Activated CD4-positive, alpha-beta memory T cell treated with anti-CD3 and anti-CD28 coated beads for 36 hours (primary cell): ENCODE measurements at regions of chr13 and their contacts with region 1.

Region 1: DNA sequence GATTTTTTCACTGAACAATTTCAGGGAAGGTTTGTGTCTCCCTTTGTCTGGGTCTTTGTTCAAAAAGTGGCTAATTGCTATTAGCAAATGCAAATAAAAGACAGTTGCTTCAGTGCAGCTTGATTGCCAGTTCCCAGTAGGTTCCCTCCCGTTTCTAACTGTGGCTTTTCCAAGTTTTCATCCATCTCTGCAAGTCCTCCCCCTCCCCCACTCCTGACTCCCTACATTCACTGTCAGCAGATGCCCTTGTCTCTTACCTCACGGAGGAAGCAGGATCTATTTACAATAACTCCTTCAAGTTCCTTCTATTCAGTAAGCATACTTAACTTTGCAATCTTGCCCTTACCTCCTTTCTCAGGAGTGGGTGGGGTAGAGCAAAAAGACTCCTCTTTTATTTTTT is 55.4 kb upstream of the SCEL start:
- DNase-seq: no peak
- H3K4me3 Mint-ChIP-seq: no peak overlapping the region
- H3K27ac Mint-ChIP-seq: no peak overlapping the region
- H3K4me1 Mint-ChIP-seq: peaks cover 18% of the 10 kb centered on the region
- H3K27me3 Mint-ChIP-seq: no peaks in the 10 kb centered on the region

Region 2: GRCh38 chr13:77184455-77184854 is 295.6 kb before region 1 on chr13:
- CTCF ChIA-PET with region 1: interaction called, 11 read pairs
- POLR2A ChIA-PET with region 1: no interaction called
- intact Hi-C with region 1: loop called (anchors 2 kb)
- DNase-seq: peak; percentile 77
- H3K4me3 Mint-ChIP-seq: no peak overlapping the region
- H3K27ac Mint-ChIP-seq: peak overlapping the region; percentile 40
- H3K4me1 Mint-ChIP-seq: peaks cover 22% of the 10 kb centered on the region
- H3K27me3 Mint-ChIP-seq: no peaks in the 10 kb centered on the region

Region 3: DNA sequence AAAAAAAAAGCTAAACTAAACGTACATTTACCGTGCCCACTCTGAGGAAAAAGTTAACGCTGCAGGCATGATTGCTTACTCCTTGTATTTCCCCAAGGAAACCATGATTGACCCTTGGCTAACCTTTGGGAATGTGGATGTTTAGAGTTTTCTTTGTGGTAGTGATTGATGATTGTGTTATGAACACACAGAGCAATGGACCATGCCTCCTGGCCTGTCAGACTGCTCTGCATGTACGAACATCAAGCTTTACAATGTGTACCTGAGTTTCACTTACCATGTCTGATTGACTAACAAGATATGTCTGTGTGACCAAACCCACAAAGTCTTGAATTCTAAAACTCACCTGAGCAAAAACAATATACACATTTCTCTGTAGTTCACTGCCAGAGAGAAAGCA is 188.3 kb before region 1 on chr13:
- CTCF ChIA-PET with region 1: interaction called, 13 read pairs
- POLR2A ChIA-PET with region 1: no interaction called
- intact Hi-C with region 1: loop called (anchors 2 kb)
- DNase-seq: no peak
- H3K4me3 Mint-ChIP-seq: no peak overlapping the region
- H3K27ac Mint-ChIP-seq: peak overlapping the region; percentile 42
- H3K4me1 Mint-ChIP-seq: peaks cover 39% of the 10 kb centered on the region
- H3K27me3 Mint-ChIP-seq: no peaks in the 10 kb centered on the region

Region 4: GRCh38 chr13:77345150-77345780 is 134.8 kb before region 1 on chr13:
- CTCF ChIA-PET with region 1: no interaction called
- POLR2A ChIA-PET with region 1: interaction called, 4 read pairs
- intact Hi-C with region 1: loop called (anchors 1 kb)
- DNase-seq: peak; percentile 53
- H3K4me3 Mint-ChIP-seq: peak overlapping the region; percentile 51
- H3K27ac Mint-ChIP-seq: peak overlapping the region; percentile 90
- H3K4me1 Mint-ChIP-seq: peaks cover 24% of the 10 kb centered on the region
- H3K27me3 Mint-ChIP-seq: no peaks in the 10 kb centered on the region

Region 5: DNA sequence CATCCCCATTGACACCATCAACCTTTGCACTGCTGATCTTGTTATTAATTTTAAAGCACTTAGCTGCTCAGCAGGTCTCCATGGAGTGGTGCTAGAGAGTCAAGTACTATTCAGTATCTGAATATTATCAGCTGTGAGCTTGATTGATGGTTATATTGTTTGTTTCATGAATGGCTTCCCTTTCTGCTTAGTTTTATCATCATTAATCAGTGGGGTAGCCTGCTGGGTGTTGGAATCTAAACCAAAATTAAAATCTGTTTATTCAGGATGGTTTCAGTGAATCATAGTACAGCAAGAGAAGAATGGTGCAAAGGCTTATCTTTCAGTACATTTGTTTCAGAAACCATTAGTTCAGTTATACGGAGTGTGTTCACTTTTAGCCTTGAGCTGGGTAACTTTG is 12.9 kb after region 1 on chr13:
- CTCF ChIA-PET with region 1: interaction called, 15 read pairs
- POLR2A ChIA-PET with region 1: no interaction called
- intact Hi-C with region 1: no loop called
- DNase-seq: no peak
- H3K4me3 Mint-ChIP-seq: no peak overlapping the region
- H3K27ac Mint-ChIP-seq: no peak overlapping the region
- H3K4me1 Mint-ChIP-seq: no peaks in the 10 kb centered on the region
- H3K27me3 Mint-ChIP-seq: peaks cover 2% of the 10 kb centered on the region

Region 6: DNA sequence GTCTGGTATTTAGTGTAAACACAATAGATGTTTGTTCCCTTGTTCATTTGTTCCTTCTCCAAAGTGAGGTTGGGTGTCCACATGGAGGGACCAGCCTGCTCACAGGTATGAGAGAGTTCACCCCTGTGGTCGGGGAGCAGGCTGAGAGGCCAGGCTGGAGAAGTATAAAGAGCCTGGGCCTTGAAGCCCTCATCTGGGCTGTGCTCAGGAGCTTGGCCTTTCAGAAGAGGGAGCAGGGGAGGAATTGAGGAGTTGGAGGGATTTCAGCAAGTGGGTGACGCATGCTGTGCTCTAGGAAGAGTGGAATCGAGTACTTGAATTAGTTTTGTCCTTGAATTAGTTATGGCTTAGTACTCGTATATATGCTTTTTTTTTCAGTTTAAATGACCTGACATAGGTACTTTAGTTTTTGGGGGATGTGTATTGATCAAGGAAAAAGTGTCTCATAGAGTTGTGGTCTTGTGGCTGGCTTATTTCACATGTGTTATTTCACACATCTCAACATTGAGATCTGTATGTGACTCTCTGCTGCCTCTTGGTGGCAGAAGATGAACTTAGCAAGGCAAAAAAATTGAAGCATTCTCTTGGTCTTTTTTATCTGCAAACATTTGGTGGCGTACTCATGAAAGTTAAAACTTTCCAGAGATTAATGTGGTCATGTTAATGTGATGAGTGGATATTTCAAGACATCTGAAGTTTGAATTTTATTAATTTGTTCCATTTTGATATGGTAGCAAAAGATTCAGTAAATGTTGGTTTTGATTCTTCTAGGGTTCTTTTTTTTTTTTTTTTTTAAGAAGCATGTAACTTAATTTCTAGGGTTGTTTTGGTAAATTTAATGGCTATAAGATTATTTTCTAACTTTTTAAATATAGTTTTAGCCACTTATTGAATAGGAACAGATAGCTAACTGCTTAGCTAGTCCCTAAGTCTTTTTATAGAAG is 271.7 kb after region 1 on chr13:
- CTCF ChIA-PET with region 1: interaction called, 6 read pairs
- POLR2A ChIA-PET with region 1: no interaction called
- intact Hi-C with region 1: loop called (anchors 1 kb)
- DNase-seq: peak; percentile 46
- H3K4me3 Mint-ChIP-seq: no peak overlapping the region
- H3K27ac Mint-ChIP-seq: no peak overlapping the region
- H3K4me1 Mint-ChIP-seq: peaks cover 13% of the 10 kb centered on the region
- H3K27me3 Mint-ChIP-seq: no peaks in the 10 kb centered on the region